Dorsolateral prefrontal cortex (tissue), 120 donors: ENCODE measurements at regions of chr3 and their contacts with region 1.

Region 1: GRCh38 chr3:140724856-140725812 is 47.3 kb downstream of the TRIM42 start:
- DNase-seq: no peak
- H3K4me3 ChIP-seq: no peak overlapping the region
- H3K27ac ChIP-seq: no peak overlapping the region
- H3K27me3 ChIP-seq: peaks cover 0 to 5% (median 0%) of the 10 kb centered on the region in 45 donors
- CTCF ChIP-seq: no peak

Region 2: GRCh38 chr3:139940622-139941021 is 784.5 kb before region 1 on chr3:
- intact Hi-C with region 1: loop called in 1 of 2 experiments (anchors 5 kb)
- DNase-seq: no peak
- H3K4me3 ChIP-seq: no peak overlapping the region
- H3K27ac ChIP-seq: no peak overlapping the region
- H3K27me3 ChIP-seq: peaks cover 0 to 5% (median 0%) of the 10 kb centered on the region in 45 donors
- CTCF ChIP-seq: no peak